WTC11 (cell line): ENCODE measurements at regions of chr1 and their contacts with region 1.

Region 1: GRCh38 chr1:47437447-47438164 is at the start of gene FOXD2:
- DNase-seq: peak; percentile 95
- ATAC-seq: peak; percentile 57
- H3K4me3 Mint-ChIP-seq: peak within 1 kb of the TSS; percentile 74
- H3K27ac Mint-ChIP-seq: no peak within 1 kb of the TSS
- H3K4me1 Mint-ChIP-seq: peaks cover 34% of the 10 kb centered on the region
- H3K27me3 Mint-ChIP-seq: peaks cover 49% of the 10 kb centered on the region
- CTCF ChIP-seq: peak; percentile 99
- total RNA-seq, gene FOXD2: 0.05 to 0.07 TPM (median 0.05 TPM) in 3 replicates

Region 2: DNA sequence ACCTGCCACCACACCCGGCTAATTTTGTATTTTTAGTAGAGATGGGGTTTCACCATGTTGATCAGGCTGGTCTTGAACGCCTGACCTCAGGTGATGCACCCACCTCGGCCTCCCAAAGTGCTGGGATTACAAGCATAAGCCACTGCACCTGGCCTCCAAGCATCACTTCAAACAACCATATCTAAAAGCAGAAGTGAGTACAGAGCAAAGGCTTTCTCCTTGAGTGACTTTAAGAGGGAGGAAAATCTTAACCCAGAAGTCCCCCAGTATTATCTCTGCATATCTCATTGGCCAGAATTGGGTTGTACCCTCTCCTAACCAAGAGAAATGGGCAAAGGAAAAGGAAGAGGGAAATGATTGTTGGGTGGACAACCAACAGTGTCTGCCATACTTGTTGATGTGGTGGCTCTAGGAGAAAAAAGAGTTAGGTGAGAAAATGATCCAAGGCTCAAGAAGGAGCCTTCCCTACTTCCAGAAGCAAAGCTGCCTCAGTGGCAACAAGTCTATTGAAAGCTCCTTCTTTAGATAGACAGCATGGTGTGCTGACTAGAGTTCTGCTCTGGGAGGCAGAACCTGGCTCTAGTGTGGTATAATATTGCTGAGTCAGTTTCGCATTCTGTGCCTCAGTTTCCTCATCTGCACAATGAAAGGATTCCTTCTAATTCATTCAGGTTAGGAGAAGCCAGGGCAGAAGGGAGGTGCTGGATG is 38.3 kb before region 1 on chr1:
- CTCF ChIA-PET with region 1: interaction called, 6 read pairs
- POLR2A ChIA-PET with region 1: interaction called, 11 read pairs
- DNase-seq: no peak
- ATAC-seq: no peak
- H3K4me3 Mint-ChIP-seq: no peak overlapping the region
- H3K27ac Mint-ChIP-seq: no peak overlapping the region
- H3K4me1 Mint-ChIP-seq: no peaks in the 10 kb centered on the region
- H3K27me3 Mint-ChIP-seq: peaks cover 55% of the 10 kb centered on the region
- CTCF ChIP-seq: no peak

Region 3: DNA sequence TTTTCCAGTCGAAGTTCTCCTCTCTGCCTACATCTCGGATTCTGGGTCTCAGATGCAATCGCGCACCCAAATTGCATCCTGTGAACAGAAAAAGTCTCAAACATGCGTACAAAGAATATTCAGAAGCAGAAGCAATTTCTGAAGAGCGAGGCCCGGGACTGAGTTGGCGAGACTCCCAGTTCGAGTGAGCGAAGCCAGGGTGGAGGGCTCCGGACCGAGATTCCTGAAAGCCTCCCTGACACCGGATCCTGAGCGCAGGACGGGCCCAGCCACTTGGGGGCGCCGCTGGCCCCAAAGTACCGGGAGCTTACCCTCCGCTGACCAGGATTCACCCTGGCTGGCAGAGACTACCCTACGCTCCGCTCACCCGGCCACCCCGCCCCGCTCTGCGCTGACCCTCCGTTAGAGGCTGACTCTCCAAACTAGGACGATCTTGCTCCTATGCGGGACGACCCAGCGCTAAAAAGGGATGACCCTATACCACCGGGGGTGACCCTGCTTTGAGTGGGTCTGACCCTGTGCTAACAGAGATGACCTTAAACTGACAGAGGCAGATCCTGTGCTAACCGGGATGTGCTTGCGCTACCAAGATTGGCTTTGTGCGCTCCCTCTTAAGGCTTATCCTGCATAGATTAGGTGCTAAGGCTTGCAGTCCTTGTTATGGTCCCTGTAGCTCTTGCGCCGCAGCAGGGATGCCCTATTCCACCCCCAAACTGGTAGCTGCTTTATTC is 12.4 kb after region 1 on chr1:
- CTCF ChIA-PET with region 1: interaction called, 177 read pairs
- POLR2A ChIA-PET with region 1: interaction called, 3 read pairs
- DNase-seq: peak; percentile 89
- ATAC-seq: peak; percentile 91
- H3K4me3 Mint-ChIP-seq: peak overlapping the region; percentile 58
- H3K27ac Mint-ChIP-seq: no peak overlapping the region
- H3K4me1 Mint-ChIP-seq: peaks cover 36% of the 10 kb centered on the region
- H3K27me3 Mint-ChIP-seq: no peaks in the 10 kb centered on the region; the same call in none of the 2 replicates
- CTCF ChIP-seq: peak; percentile 58

Region 4: DNA sequence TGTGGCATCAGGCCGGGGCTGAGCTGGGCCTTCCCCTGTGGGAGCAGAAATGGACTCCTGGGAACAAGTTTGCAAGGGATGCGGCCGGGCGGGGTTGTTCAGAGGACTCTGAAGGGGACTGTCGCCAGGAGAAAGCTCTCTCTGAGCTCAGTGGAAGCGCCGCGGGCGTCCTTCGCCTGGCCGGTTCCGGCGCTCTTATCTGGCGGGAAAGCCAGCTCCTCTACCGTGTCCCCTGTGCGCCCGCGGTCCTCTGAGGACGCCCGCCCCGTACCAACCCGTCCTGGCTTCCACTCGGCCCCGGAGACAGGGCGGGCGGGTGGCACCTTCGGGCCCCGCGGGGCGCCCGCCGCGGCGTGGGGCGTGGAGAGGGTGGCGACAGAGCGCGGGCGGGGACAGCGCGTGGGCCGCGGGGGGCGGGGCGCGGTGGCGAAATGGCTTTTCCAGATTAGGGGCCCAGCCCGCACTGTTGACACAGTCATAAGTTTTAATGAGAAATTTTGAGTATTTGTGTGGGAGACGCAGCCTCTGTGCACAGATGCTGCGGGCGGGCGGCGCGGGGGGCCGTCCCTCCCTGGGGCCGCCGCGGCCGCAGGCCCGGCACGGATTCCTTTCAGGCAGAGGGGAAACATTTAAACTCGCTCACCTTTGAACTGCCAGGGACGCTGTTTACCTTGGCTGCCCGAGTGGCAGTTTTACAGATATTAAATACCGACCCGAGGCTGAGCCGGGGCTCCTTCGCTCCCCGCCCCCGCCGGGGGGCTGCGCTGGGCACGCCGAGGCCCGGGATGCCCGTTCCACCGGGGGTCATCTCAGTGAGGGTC is 70.5 kb after region 1 on chr1:
- CTCF ChIA-PET with region 1: interaction called, 20 read pairs
- POLR2A ChIA-PET with region 1: no interaction called
- DNase-seq: peak; percentile 53
- ATAC-seq: peak; percentile 60
- H3K4me3 Mint-ChIP-seq: peak overlapping the region; percentile 77
- H3K27ac Mint-ChIP-seq: no peak overlapping the region
- H3K4me1 Mint-ChIP-seq: peaks cover 13% of the 10 kb centered on the region
- H3K27me3 Mint-ChIP-seq: peaks cover 89% of the 10 kb centered on the region
- CTCF ChIP-seq: no peak

Region 5: DNA sequence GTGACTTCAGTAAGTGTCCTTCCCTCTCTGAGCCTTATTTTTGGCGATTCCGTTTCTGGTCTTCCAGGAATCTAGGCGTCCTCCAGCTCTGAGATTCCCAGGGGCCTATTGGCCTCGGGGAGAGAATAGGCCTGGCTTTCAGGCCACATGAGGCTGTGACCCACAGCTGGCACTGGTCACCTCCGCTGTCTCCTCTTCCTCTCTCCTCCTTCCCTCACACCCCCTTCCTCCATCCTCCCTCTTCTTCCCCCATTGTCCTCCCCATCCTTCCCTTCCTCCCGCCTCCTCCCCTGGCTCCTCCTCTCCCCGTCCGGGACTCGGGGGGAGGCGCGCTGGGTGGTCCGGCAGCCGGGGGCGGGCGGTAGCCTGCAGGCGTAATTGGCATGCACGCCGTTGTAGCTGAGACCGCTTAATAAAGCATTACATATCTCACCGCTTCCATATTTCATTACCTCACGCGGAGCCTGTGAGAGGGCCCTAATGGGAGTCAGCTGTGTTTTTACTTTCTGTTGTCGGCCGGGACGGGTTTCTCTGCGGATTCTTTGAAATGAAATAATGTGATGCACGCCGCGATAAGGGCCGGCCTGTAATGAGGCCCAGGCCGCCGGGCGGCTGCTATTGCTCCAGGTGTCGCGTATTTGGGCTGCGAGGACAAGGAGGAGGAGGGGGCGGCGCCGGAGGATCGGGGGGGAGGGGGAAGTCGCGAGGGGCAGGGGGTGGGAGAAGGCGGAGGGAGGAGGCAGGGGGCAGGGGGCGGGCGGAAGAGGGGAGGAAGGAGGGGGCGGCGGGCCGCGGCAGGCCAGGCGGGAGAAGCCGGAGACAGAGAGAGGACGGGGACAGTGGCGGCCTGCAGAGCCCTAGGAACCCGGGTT is 95.6 kb after region 1 on chr1:
- CTCF ChIA-PET with region 1: interaction called, 52 read pairs
- POLR2A ChIA-PET with region 1: no interaction called
- DNase-seq: peak; percentile 73
- ATAC-seq: peak; percentile 76
- H3K4me3 Mint-ChIP-seq: peak overlapping the region; percentile 78
- H3K27ac Mint-ChIP-seq: peak overlapping the region; percentile 80; the same call in 1 of the 2 replicates
- H3K4me1 Mint-ChIP-seq: peaks cover 33% of the 10 kb centered on the region
- H3K27me3 Mint-ChIP-seq: peaks cover 34% of the 10 kb centered on the region
- CTCF ChIP-seq: no peak

Region 6: GRCh38 chr1:47710329-47711071 is 272.9 kb after region 1 on chr1:
- CTCF ChIA-PET with region 1: interaction called, 154 read pairs
- POLR2A ChIA-PET with region 1: interaction called, 4 read pairs
- DNase-seq: peak; percentile 86
- ATAC-seq: peak; percentile 56
- H3K4me3 Mint-ChIP-seq: peak overlapping the region; percentile 64
- H3K27ac Mint-ChIP-seq: no peak overlapping the region
- H3K4me1 Mint-ChIP-seq: peaks cover 29% of the 10 kb centered on the region
- H3K27me3 Mint-ChIP-seq: peaks cover 99% of the 10 kb centered on the region
- CTCF ChIP-seq: peak; percentile 97